ENCODE measurements at regions of chr2 and their contacts with region 1.

Region 1: GRCh38 chr2:164841719-164842623 is at the start of gene COBLL1:
- DNase-seq: peak; percentile 72 to 79
- ATAC-seq: peak; percentile 78 to 85 (median 82)
- H3K4me3 ChIP-seq: peak within 1 kb of the TSS; percentile 90
- H3K27ac ChIP-seq: peak within 1 kb of the TSS; percentile 83
- H3K4me1 ChIP-seq: no peaks in the 10 kb centered on the region
- H3K27me3 ChIP-seq: no peaks in the 10 kb centered on the region
- CTCF ChIP-seq: peak; percentile 71
- total RNA-seq, gene COBLL1: 3.4 to 6.1 (median 4.6) TPM

Region 2: GRCh38 chr2:164737612-164738081 is 104.3 kb before region 1 on chr2:
- intact Hi-C with region 1: loop called (anchors 5 to 10 kb)
- DNase-seq: peak; percentile 24 to 55
- ATAC-seq: peak; percentile 53 to 83 (median 72)
- H3K4me3 ChIP-seq: no peak overlapping the region
- H3K27ac ChIP-seq: no peak overlapping the region
- H3K4me1 ChIP-seq: peaks cover 3% of the 10 kb centered on the region
- H3K27me3 ChIP-seq: no peaks in the 10 kb centered on the region
- CTCF ChIP-seq: peak; percentile 77

Region 3: DNA sequence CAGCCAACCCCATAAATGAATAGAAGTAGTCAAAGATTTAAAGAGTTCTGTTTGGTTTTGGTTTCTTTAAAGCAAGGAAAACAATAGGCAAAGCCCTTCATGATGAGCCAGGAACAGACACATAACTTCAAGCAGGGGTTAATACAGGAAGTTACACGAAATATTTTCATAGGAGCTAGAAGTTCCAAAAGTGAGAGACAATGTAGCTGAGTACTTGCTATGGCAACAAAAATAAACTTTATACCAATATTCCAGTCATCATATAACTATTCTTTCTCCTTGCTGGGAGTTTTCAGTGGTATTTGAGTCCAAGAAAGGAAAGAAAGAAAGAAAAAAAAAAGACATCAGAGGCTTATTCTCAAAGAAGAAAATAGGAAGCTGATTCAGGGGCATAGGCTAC is 56.5 kb before region 1 on chr2:
- intact Hi-C with region 1: loop called in 1 of 2 experiments (anchors 5 kb)
- DNase-seq: no peak
- ATAC-seq: no peak
- H3K4me3 ChIP-seq: no peak overlapping the region
- H3K27ac ChIP-seq: peak overlapping the region; percentile 54
- H3K4me1 ChIP-seq: no peaks in the 10 kb centered on the region
- H3K27me3 ChIP-seq: no peaks in the 10 kb centered on the region
- CTCF ChIP-seq: no peak

Region 4: GRCh38 chr2:164917296-164917903 is 75.4 kb after region 1 on chr2:
- intact Hi-C with region 1: loop called in 1 of 2 experiments (anchors 5 kb)
- DNase-seq: peak in 1 of 2 donors; percentile 28
- ATAC-seq: no peak
- H3K4me3 ChIP-seq: no peak overlapping the region
- H3K27ac ChIP-seq: no peak overlapping the region
- H3K4me1 ChIP-seq: no peaks in the 10 kb centered on the region
- H3K27me3 ChIP-seq: no peaks in the 10 kb centered on the region
- CTCF ChIP-seq: peak; percentile 51